B cell (primary cell): ENCODE measurements at regions of chr21 and their contacts with region 1.

Region 1: DNA sequence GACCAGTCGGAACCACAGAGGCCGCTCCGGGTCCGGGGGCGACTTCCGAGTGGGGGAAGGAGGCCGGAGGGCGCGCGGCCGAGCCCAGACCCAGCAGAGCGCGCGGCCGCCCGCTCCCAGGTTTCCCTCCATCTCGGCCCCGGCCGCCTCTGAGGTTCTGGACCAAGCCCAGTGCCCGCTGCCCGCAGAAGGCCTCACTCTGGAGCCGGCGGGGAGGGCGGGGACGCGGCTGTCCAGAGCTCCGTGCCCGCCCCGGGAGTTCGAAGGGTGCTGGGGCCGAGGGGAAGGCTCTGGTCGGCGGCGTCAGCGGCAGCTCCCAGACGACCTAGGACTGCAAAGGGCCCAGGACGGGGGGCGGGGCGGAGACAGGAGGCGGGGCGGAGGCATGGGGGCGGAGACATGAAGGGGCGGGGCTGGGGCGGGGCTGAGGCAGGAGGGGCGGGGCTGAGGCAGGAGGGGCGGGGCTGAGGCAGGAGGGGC is 48.0 kb upstream of the SLC19A1 start:
- DNase-seq: peak; percentile 71
- ATAC-seq: peak; percentile 67
- H3K4me3 ChIP-seq: peak overlapping the region in 4 of 5 experiments; percentile 36 to 58 (median 51)
- H3K4me3 Mint-ChIP-seq: peak overlapping the region; percentile 27
- H3K27ac ChIP-seq: no peak overlapping the region
- H3K27ac Mint-ChIP-seq: no peak overlapping the region
- H3K4me1 ChIP-seq: peaks cover 25 to 30% of the 10 kb centered on the region in 2 donors
- H3K4me1 Mint-ChIP-seq: peaks cover 11% of the 10 kb centered on the region
- H3K27me3 ChIP-seq: peaks cover 0 to 32% (median 8%) of the 10 kb centered on the region in 4 experiments
- H3K27me3 Mint-ChIP-seq: peaks cover 44% of the 10 kb centered on the region
- CTCF ChIP-seq: no peak

Region 2: GRCh38 chr21:45615145-45615711 is 24.9 kb after region 1 on chr21:
- CTCF ChIA-PET with region 1: no interaction called
- POLR2A ChIA-PET with region 1: no interaction called
- intact Hi-C with region 1: loop called (anchors 2 kb)
- DNase-seq: peak; percentile 89
- ATAC-seq: peak; percentile 86
- H3K4me3 ChIP-seq: peak overlapping the region in 2 of 5 experiments; percentile 12 to 19
- H3K4me3 Mint-ChIP-seq: peak overlapping the region; percentile 72
- H3K27ac ChIP-seq: peak overlapping the region; percentile 55 to 79
- H3K27ac Mint-ChIP-seq: peak overlapping the region; percentile 86
- H3K4me1 ChIP-seq: peaks cover 15 to 27% of the 10 kb centered on the region in 2 donors
- H3K4me1 Mint-ChIP-seq: peaks cover 18% of the 10 kb centered on the region
- H3K27me3 ChIP-seq: peaks cover 0 to 8% (median 0%) of the 10 kb centered on the region in 4 experiments
- H3K27me3 Mint-ChIP-seq: peaks cover 20% of the 10 kb centered on the region
- CTCF ChIP-seq: no peak

Region 3: DNA sequence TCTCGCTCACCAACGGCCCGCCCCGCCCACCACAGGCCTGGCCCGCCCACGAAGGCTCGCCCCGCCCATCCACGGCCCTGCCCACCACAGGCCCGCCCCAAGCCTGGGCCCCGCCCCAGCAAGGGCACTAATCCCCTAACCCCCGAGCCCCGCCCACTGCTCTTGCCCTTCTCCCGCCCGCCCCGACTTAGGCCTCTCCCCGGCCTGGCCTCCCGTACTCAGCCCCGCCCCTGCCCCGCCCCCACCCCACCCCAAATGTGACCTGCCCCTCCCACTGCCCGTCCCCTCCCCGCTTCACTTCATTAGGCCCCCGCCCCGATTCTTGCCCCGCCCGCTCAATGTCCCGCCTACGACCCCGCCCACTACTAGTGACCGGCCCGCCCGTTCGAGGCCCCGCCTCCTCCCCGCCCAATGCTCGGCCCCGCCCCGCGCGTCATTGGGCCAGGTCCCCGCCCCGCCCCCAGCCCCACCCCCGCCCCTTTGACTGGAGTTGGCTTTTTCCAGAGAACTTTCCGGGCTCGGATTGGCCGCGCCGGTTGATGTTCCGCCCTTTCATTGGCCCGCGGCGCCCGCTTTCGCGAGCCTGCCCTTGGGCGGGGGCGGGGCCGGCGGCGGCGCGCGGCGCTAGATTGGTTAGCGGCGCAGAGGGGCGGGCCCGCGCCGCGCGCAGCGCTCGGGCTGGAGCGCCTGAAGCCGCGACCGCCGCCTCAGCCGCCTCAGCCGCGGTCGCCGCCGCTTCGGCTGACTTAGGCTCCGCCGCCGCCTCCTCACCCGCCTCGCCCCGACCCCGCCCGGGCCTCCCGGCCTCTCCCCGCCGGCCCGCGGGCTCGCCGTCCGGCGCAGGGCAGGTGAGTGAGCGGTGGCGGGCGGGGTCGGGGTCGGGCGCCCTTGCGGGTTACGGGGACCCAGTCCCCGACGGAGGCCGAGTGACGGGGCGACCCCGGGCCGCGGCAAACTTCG is 53.0 kb after region 1 on chr21 and contains the start of gene PCBP3:
- CTCF ChIA-PET with region 1: no interaction called
- POLR2A ChIA-PET with region 1: no interaction called
- intact Hi-C with region 1: loop called (anchors 5 kb)
- DNase-seq: peak; percentile 90
- ATAC-seq: peak; percentile 77
- H3K4me3 ChIP-seq: peak within 1 kb of the TSS in 4 of 5 experiments; percentile 13 to 61 (median 42)
- H3K4me3 Mint-ChIP-seq: peak within 1 kb of the TSS; percentile 81
- H3K27ac ChIP-seq: no peak within 1 kb of the TSS
- H3K27ac Mint-ChIP-seq: no peak within 1 kb of the TSS
- H3K4me1 ChIP-seq: peaks cover 35% of the 10 kb centered on the region in 2 donors
- H3K4me1 Mint-ChIP-seq: peaks cover 39% of the 10 kb centered on the region
- H3K27me3 ChIP-seq: peaks cover 2 to 36% (median 31%) of the 10 kb centered on the region in 4 experiments
- H3K27me3 Mint-ChIP-seq: peaks cover 31% of the 10 kb centered on the region
- CTCF ChIP-seq: no peak
- total RNA-seq, gene PCBP3: 2.3 and 2.7 TPM in 2 replicates